ENCODE measurements at regions of chr12 and their contacts with region 1.

Region 1: DNA sequence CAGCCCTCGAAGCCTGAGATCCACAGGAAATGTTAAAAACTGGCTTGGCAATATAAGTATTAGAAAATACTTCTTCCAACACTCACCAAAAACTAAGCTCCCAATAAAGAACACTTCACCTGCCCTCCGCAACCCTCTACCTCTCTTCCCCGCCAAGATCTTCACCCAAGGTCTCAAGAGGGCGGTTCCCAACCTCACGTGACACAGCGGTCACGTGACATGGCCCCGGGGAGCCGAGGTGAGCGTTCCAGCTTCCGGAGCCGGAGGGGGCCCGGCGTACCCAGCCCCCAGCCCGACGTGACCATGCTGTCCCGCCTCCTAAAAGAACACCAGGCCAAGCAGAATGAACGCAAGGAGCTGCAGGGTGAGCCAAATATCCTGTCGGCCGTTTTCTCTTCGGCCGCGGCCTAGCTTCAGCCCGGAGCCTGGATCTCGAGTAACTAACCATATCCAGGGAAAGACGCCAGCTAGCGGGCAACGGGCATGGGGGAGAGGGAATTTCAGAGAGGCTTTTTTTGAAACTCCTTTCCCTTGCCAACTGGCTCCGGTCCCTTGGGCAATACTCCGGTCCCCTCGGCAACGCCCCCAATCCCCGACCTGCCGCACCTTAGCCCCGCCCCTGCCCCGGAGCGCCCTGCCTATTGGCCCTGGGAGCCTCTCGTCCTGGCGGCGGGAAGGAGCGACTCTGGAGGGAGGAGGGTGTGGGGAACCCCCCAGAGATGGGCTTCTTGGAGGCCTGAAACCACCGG is at the start of gene BLOC1S1:
- DNase-seq: peak; percentile 86
- ATAC-seq: peak; percentile 82
- H3K4me3 ChIP-seq: peak within 1 kb of the TSS; percentile 77 to 96 (median 84)
- H3K27ac ChIP-seq: peak within 1 kb of the TSS; percentile 81
- H3K4me1 ChIP-seq: peaks cover 54% of the 10 kb centered on the region
- H3K27me3 ChIP-seq: peaks cover 0 to 11% of the 10 kb centered on the region in 2 experiments; a peak in 2 of 5 replicates
- CTCF ChIP-seq: no peak
- EP300 ChIP-seq: peak in 1 of 2 experiments; percentile 36; a peak in 1 of 4 replicates
- POLR2A ChIP-seq: peak; percentile 55 to 60
- RAD21 ChIP-seq: no peak
- total RNA-seq, gene BLOC1S1: 95.3 and 99.7 TPM in 2 replicates

Region 2: DNA sequence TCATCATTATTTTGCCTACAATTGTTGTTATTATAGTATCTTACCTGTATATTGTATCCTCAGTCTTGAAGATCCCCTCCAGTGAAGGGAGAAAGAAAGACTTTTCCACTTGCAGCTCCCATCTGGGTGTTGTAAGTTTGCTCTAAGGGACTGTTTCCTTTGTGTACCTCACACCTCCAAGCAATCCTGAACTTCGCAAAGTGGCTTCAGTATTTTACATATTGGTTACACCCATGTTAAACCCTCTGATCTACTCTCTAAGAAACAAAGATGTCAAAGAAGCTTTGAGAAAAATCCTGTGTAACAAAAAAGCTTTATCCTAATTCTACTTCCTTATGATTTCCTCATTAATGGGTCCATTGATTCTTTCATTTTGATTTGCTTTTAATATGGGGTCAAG is 599.9 kb before region 1 on chr12:
- CTCF ChIA-PET with region 1: no interaction called
- POLR2A ChIA-PET with region 1: no interaction called
- in situ Hi-C with region 1: no loop called
- intact Hi-C with region 1: no loop called
- DNase-seq: no peak
- ATAC-seq: no peak
- H3K4me3 ChIP-seq: no peak overlapping the region
- H3K27ac ChIP-seq: no peak overlapping the region
- H3K4me1 ChIP-seq: no peaks in the 10 kb centered on the region
- H3K27me3 ChIP-seq: 0 out of 5 replicates have a peak, but pooled peaks cover 0 to 5% of the 10 kb centered on the region in 2 experiments
- CTCF ChIP-seq: no peak
- EP300 ChIP-seq: no peak
- POLR2A ChIP-seq: no peak
- RAD21 ChIP-seq: no peak

Region 3: GRCh38 chr12:55642669-55643068 is 73.3 kb before region 1 on chr12:
- CTCF ChIA-PET with region 1: no interaction called
- POLR2A ChIA-PET with region 1: no interaction called
- in situ Hi-C with region 1: no loop called
- intact Hi-C with region 1: no loop called
- DNase-seq: no peak
- ATAC-seq: no peak
- H3K4me3 ChIP-seq: no peak overlapping the region
- H3K27ac ChIP-seq: no peak overlapping the region
- H3K4me1 ChIP-seq: no peaks in the 10 kb centered on the region
- H3K27me3 ChIP-seq: peaks cover 0 to 4% of the 10 kb centered on the region in 2 experiments; a peak in 1 of 5 replicates
- CTCF ChIP-seq: no peak
- EP300 ChIP-seq: no peak
- POLR2A ChIP-seq: no peak
- RAD21 ChIP-seq: no peak

Region 4: GRCh38 chr12:55659486-55660385 is 56.3 kb before region 1 on chr12:
- CTCF ChIA-PET with region 1: interaction called, 6 read pairs
- POLR2A ChIA-PET with region 1: interaction called, 3 read pairs
- in situ Hi-C with region 1: no loop called
- intact Hi-C with region 1: loop called (anchors 1 kb)
- DNase-seq: peak; percentile 27
- ATAC-seq: peak; percentile 76
- H3K4me3 ChIP-seq: no peak overlapping the region
- H3K27ac ChIP-seq: no peak overlapping the region
- H3K4me1 ChIP-seq: peaks cover 10% of the 10 kb centered on the region
- H3K27me3 ChIP-seq: 0 out of 5 replicates have a peak, but pooled peaks cover 0 to 1% of the 10 kb centered on the region in 2 experiments
- CTCF ChIP-seq: peak; percentile 66
- EP300 ChIP-seq: no peak
- POLR2A ChIP-seq: no peak
- RAD21 ChIP-seq: peak; percentile 49; the same call in 1 of the 2 replicates

Region 5: GRCh38 chr12:55673638-55674037 is 42.4 kb before region 1 on chr12:
- CTCF ChIA-PET with region 1: no interaction called
- POLR2A ChIA-PET with region 1: no interaction called
- in situ Hi-C with region 1: no loop called
- intact Hi-C with region 1: no loop called
- DNase-seq: no peak
- ATAC-seq: no peak
- H3K4me3 ChIP-seq: no peak overlapping the region
- H3K27ac ChIP-seq: no peak overlapping the region
- H3K4me1 ChIP-seq: no peaks in the 10 kb centered on the region
- H3K27me3 ChIP-seq: no peaks in the 10 kb centered on the region; a peak in 2 of 5 replicates
- CTCF ChIP-seq: no peak
- EP300 ChIP-seq: no peak
- POLR2A ChIP-seq: no peak
- RAD21 ChIP-seq: no peak

Region 6: DNA sequence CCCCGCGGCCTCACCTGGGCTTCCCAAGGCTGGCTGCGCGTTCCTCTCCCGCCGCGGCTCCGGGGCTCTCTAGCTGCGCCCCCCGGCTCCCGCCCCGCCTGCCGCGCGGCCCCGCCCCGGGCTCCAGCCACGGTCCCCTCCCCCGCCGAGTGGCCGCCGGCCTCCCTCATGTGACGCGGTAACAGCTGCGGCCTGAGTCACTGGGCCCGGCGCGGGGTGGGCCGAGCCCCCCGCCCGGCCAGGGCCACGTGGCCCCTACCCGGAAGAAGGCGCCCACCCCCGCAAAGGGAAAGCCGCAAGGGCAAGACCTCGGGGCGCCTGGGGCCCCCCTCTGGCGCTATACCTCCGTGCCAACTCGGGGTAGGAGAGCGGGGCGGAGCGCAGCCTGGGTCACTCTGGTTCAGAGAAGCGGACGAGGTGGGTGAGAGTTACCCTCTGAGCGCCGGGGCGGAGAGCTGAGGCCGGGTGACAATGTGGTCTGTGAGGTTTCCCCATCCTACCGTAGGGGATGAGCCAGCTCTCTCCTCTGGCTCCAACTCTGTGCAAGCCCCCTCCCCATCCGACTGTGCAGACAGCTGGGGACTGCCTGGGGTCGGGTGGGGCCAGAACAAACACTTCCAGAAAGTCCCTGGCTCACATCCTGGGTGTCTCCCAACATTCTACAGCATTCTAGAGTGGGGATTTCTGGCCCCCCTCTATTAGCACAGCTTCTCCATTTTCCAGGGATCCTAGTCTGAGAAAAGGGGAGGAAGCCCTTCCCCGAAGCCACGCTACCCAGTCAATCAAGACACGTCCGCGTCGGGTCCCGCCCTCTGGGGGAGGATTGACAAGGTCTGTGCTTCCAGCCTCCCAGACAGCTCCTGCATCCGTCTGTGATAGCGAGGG is 13.2 kb after region 1 on chr12 and contains the start of gene CD63:
- CTCF ChIA-PET with region 1: no interaction called
- POLR2A ChIA-PET with region 1: interaction called, 38 read pairs
- in situ Hi-C with region 1: no loop called
- intact Hi-C with region 1: no loop called
- DNase-seq: peak; percentile 73
- ATAC-seq: peak; percentile 81
- H3K4me3 ChIP-seq: peak within 1 kb of the TSS; percentile 84 to 89 (median 84)
- H3K27ac ChIP-seq: peak within 1 kb of the TSS; percentile 79
- H3K4me1 ChIP-seq: peaks cover 38% of the 10 kb centered on the region
- H3K27me3 ChIP-seq: no peaks in the 10 kb centered on the region; a peak in 1 of 5 replicates
- CTCF ChIP-seq: peak; percentile 17; the same call in 1 of the 2 replicates
- EP300 ChIP-seq: 0 out of 4 replicates have a peak, but pooled peaks of 1 of the 2 experiments have one; percentile 12
- POLR2A ChIP-seq: peak; percentile 41 to 69; a peak in 2 of 4 replicates
- RAD21 ChIP-seq: no peak
- total RNA-seq, gene CD63: 134 and 277 TPM in 2 replicates